Activated CD4-positive, alpha-beta T cell treated with anti-CD3 and anti-CD28 coated beads, Interleukin-2, amount 10 ng/mL, durations not matched to agents 24 days and 14 days (primary cell): ENCODE measurements at regions of chr20 and their contacts with region 1.

Region 1: GRCh38 chr20:17315407-17316231 is 88.8 kb downstream of the PCSK2 start:
- DNase-seq: no peak
- H3K4me3 Mint-ChIP-seq: no peak overlapping the region
- H3K27ac Mint-ChIP-seq: no peak overlapping the region
- H3K4me1 Mint-ChIP-seq: no peaks in the 10 kb centered on the region
- H3K27me3 Mint-ChIP-seq: peaks cover 31% of the 10 kb centered on the region

Region 2: GRCh38 chr20:17226410-17227218 is 89.0 kb before region 1 on chr20 and contains the start of gene PCSK2:
- intact Hi-C with region 1: no loop called
- DNase-seq: no peak
- H3K4me3 Mint-ChIP-seq: no peak within 1 kb of the TSS
- H3K27ac Mint-ChIP-seq: no peak within 1 kb of the TSS
- H3K4me1 Mint-ChIP-seq: peaks cover 4% of the 10 kb centered on the region
- H3K27me3 Mint-ChIP-seq: peaks cover 45% of the 10 kb centered on the region
- total RNA-seq, gene PCSK2: not detected in 2 replicates

Region 3: DNA sequence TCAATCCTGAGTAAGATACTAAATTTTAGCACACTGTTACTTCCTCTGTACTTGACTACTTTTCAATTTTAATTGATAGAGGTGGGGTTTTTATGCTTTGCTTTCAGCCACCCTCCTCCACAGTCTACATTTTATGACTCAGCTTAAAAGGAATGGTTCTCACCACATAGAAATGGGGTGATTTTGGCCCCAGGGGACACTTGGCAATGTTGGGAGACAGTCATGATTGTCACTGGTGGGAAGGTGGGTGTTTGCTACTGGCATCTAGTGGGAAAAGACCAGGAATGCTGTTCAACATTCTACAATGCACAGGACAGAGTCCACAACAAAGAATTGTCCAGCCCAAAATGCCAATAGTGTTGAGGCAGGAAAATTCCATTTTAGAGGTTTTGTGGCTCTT is 17.4 kb before region 1 on chr20:
- intact Hi-C with region 1: no loop called
- DNase-seq: no peak
- H3K4me3 Mint-ChIP-seq: no peak overlapping the region
- H3K27ac Mint-ChIP-seq: no peak overlapping the region
- H3K4me1 Mint-ChIP-seq: no peaks in the 10 kb centered on the region
- H3K27me3 Mint-ChIP-seq: no peaks in the 10 kb centered on the region

Region 4: GRCh38 chr20:17377231-17377630 is 61.6 kb after region 1 on chr20:
- intact Hi-C with region 1: loop called (anchors 10 kb)
- DNase-seq: no peak
- H3K4me3 Mint-ChIP-seq: no peak overlapping the region
- H3K27ac Mint-ChIP-seq: no peak overlapping the region
- H3K4me1 Mint-ChIP-seq: no peaks in the 10 kb centered on the region
- H3K27me3 Mint-ChIP-seq: no peaks in the 10 kb centered on the region

Region 5: GRCh38 chr20:17569616-17570346 is 254.2 kb after region 1 on chr20 and contains the start of gene DSTN:
- intact Hi-C with region 1: no loop called
- DNase-seq: peak; percentile 97
- H3K4me3 Mint-ChIP-seq: peak within 1 kb of the TSS; percentile 94
- H3K27ac Mint-ChIP-seq: peak within 1 kb of the TSS; percentile 95
- H3K4me1 Mint-ChIP-seq: peaks cover 23% of the 10 kb centered on the region
- H3K27me3 Mint-ChIP-seq: peaks cover 9% of the 10 kb centered on the region
- total RNA-seq, gene DSTN: 58.6 and 65.6 TPM in 2 replicates